ENCODE measurements at regions of chr12 and their contacts with region 1.

Region 1: DNA sequence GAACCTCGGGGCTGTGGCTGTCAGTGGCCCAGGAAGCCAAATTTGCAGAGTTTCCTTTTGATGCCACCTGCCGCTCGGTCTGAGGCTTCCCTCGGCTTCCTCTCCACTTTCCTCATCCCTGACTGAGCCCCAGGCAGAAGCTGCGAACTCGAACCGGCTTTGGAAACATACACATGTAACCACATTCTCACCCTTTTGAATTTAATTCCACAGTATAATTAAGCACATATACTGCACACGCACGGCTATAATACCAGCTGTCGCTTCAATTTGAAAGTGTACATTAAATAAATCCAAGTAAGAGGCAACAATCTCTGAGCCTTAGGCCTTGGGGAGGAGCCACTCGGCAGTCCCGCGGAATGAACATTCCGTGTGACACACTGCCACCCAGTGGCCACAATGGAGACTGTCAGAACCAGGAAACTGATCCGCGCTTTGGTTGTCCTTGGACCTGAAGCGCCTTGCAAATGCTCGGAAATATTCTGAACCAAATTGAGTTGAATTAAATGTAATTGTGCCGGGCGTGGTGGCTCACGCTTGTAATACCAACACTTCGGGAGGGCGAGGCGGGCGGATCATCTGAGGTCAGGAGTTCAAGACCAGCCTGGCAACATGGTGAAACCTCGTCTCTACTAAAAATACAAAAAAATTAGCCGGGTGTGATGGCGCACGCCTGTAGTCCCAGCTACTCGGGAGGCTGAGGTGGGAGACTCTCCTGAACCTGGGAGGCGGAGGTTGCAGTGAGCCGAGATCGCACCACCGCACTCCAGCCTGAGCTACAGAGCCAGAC is 117.9 kb upstream of the TMPO start:
- DNase-seq: peak; percentile 76 to 85 (median 80)
- ATAC-seq: peak; percentile 94
- H3K4me3 ChIP-seq: no peak overlapping the region
- H3K27ac ChIP-seq: no peak overlapping the region
- H3K4me1 ChIP-seq: peaks cover 0 to 14% of the 10 kb centered on the region in 2 experiments; a peak in 3 of 5 replicates
- H3K27me3 ChIP-seq: no peaks in the 10 kb centered on the region
- CTCF ChIP-seq: peak; percentile 85 to 92 (median 90)
- EP300 ChIP-seq: no peak
- POLR2A ChIP-seq: no peak
- RAD21 ChIP-seq: peak; percentile 79 to 87

Region 2: GRCh38 chr12:96578526-96579125 is 1818.9 kb before region 1 on chr12:
- CTCF ChIA-PET with region 1: interaction called, 7 read pairs
- POLR2A ChIA-PET with region 1: no interaction called
- in situ Hi-C with region 1: loop called (anchors 25 kb)
- intact Hi-C with region 1: loop called (anchors 2 kb)
- DNase-seq: peak; percentile 10 to 59 (median 24)
- ATAC-seq: peak; percentile 85
- H3K4me3 ChIP-seq: no peak overlapping the region
- H3K27ac ChIP-seq: no peak overlapping the region
- H3K4me1 ChIP-seq: no peaks in the 10 kb centered on the region
- H3K27me3 ChIP-seq: no peaks in the 10 kb centered on the region
- CTCF ChIP-seq: peak; percentile 47 to 81 (median 50); a peak in 4 of 6 replicates
- EP300 ChIP-seq: no peak
- POLR2A ChIP-seq: no peak
- RAD21 ChIP-seq: peak; percentile 80 to 87

Region 3: GRCh38 chr12:97159362-97159761 is 1238.1 kb before region 1 on chr12:
- CTCF ChIA-PET with region 1: no interaction called
- POLR2A ChIA-PET with region 1: no interaction called
- in situ Hi-C with region 1: no loop called
- intact Hi-C with region 1: loop called (anchors 10 kb)
- DNase-seq: no peak
- ATAC-seq: no peak
- H3K4me3 ChIP-seq: no peak overlapping the region
- H3K27ac ChIP-seq: no peak overlapping the region
- H3K4me1 ChIP-seq: no peaks in the 10 kb centered on the region
- H3K27me3 ChIP-seq: no peaks in the 10 kb centered on the region
- CTCF ChIP-seq: no peak
- EP300 ChIP-seq: no peak
- POLR2A ChIP-seq: no peak
- RAD21 ChIP-seq: no peak

Region 4: DNA sequence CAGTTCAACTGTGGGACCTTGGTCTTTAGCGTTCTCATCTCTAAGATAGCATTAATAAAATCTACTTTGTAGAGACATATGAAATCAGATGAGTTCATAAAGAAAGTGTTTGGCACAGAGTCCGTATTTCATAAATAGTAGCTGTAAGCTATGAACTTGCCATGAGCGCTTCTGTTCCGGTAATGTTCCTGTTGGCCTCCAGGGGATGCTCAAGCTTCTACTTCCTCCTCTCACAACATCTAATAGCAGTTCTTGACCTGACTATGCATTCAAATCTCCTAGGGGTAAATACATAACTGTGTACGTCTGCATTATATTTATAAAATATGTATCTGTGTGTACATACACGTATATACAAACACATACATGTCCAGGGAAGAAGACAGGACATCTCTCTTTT is 170.3 kb before region 1 on chr12:
- CTCF ChIA-PET with region 1: no interaction called
- POLR2A ChIA-PET with region 1: no interaction called
- in situ Hi-C with region 1: no loop called
- intact Hi-C with region 1: loop called (anchors 5 kb)
- DNase-seq: peak in 3 of 4 experiments; percentile 13 to 23 (median 18)
- ATAC-seq: peak; percentile 84
- H3K4me3 ChIP-seq: no peak overlapping the region
- H3K27ac ChIP-seq: no peak overlapping the region
- H3K4me1 ChIP-seq: no peaks in the 10 kb centered on the region
- H3K27me3 ChIP-seq: no peaks in the 10 kb centered on the region
- CTCF ChIP-seq: peak; percentile 34 to 58 (median 55); a peak in 5 of 6 replicates
- EP300 ChIP-seq: no peak
- POLR2A ChIP-seq: no peak
- RAD21 ChIP-seq: peak; percentile 17 to 49; a peak in 3 of 4 replicates